Heart left ventricle (tissue), 16 donors: ENCODE measurements at regions of chr5 and their contacts with region 1.

Region 1: DNA sequence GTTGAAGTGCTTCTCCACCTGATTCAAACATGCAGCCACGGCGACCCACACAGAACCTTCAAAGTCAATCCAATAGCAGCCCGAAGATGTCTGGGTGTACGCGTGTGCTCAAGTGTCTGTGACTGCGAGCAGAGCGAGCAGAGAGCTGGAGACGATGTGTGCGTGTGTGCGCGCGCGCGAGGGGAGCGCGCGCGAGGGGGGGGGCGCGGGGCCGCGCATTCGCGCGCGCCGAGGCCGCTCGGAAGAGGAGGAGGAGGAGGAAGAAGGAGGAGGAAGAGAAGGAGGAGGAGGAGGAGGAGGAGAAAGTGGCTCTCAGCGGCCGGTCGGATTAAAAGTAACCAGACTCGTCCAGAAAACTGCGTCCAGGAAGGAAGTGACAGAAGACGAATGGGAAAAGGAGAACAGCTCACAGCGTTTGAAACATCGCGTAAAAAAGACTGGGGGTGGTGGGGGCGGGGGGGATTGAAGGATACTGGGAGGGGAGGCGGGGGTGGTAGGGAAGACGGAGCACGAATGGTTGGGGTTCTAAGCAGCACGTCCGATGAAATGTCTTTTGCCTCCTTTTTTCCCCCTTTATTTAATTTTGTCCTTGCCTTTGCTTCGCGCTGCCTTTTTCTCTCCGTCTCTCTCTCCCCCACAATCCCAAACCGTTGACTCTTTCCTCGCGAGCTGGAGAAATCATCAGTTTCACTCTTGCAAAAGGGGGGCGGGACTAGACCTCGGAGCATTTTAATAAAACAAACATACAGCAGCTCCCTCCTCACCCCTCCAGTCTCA is at the start of gene MEF2C:
- DNase-seq: peak; percentile 78 to 89 (median 86)
- ATAC-seq: peak; percentile 73 to 93 (median 85)
- H3K4me3 ChIP-seq: peak within 1 kb of the TSS; percentile 47 to 75 (median 71)
- H3K27ac ChIP-seq: peak within 1 kb of the TSS; percentile 77 to 93 (median 92)
- H3K4me1 ChIP-seq: peaks cover 0 to 53% (median 34%) of the 10 kb centered on the region in 12 donors
- H3K27me3 ChIP-seq: no peaks in the 10 kb centered on the region
- CTCF ChIP-seq: no peak
- POLR2A ChIP-seq: peak in 1 of 2 donors; percentile 87
- total RNA-seq, gene MEF2C: 36.8 to 98.5 (median 58.6) TPM

Region 2: GRCh38 chr5:88785391-88786219 is 97.6 kb before region 1 on chr5:
- intact Hi-C with region 1: loop called in 7 of 10 experiments (anchors 2 to 10 kb)
- DNase-seq: peak in 2 of 5 donors; percentile 53 to 61
- ATAC-seq: peak; percentile 91 to 96 (median 94)
- H3K4me3 ChIP-seq: peak overlapping the region in 9 of 12 donors; percentile 8 to 35 (median 20)
- H3K27ac ChIP-seq: peak overlapping the region; percentile 14 to 88 (median 82)
- H3K4me1 ChIP-seq: peaks cover 4 to 56% (median 37%) of the 10 kb centered on the region in 12 donors
- H3K27me3 ChIP-seq: no peaks in the 10 kb centered on the region
- CTCF ChIP-seq: no peak
- POLR2A ChIP-seq: no peak

Region 3: GRCh38 chr5:88833371-88834130 is 49.7 kb before region 1 on chr5:
- intact Hi-C with region 1: loop called in 8 of 10 experiments (anchors 2 to 10 kb)
- DNase-seq: peak in 4 of 5 donors; percentile 61 to 79 (median 72)
- ATAC-seq: peak; percentile 63 to 86 (median 78)
- H3K4me3 ChIP-seq: peak overlapping the region in 9 of 12 donors; percentile 21 to 41 (median 35)
- H3K27ac ChIP-seq: peak overlapping the region; percentile 56 to 93 (median 87)
- H3K4me1 ChIP-seq: peaks cover 11 to 97% (median 75%) of the 10 kb centered on the region in 12 donors
- H3K27me3 ChIP-seq: no peaks in the 10 kb centered on the region
- CTCF ChIP-seq: peak in 2 of 12 donors; percentile 23 to 24
- POLR2A ChIP-seq: no peak

Region 4: GRCh38 chr5:89756955-89757354 is 873.7 kb after region 1 on chr5:
- intact Hi-C with region 1: loop called in 1 of 10 experiments (anchors 10 kb)
- DNase-seq: peak in 2 of 5 donors; percentile 31 to 38
- ATAC-seq: peak; percentile 55 to 97 (median 82)
- H3K4me3 ChIP-seq: peak overlapping the region in 3 of 12 donors; percentile 5 to 35 (median 26)
- H3K27ac ChIP-seq: peak overlapping the region in 3 of 12 donors; percentile 14 to 35 (median 25)
- H3K4me1 ChIP-seq: peaks cover 0 to 9% (median 0%) of the 10 kb centered on the region in 12 donors
- H3K27me3 ChIP-seq: no peaks in the 10 kb centered on the region
- CTCF ChIP-seq: no peak
- POLR2A ChIP-seq: no peak

Region 5: DNA sequence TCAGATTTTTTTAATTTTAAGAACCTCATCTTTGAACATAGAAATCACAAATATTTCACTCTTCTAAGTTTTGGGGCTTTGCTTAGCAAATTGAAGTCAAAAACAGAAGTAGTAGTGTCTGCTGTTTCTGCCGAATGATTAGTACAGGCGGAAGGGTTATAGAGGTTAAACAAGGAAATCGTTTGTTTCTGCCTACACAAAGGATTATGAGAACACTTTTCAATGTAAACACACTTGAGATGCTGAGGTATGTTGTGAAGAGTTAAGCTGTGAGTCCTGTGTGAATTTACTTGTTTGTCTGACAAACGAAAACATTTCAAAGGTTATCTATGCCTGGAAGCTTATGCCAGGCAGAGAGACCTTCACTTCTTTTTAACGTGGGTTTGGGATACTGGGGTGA is 1301.5 kb after region 1 on chr5:
- intact Hi-C with region 1: loop called in 2 of 10 experiments (anchors 10 kb)
- DNase-seq: no peak
- ATAC-seq: no peak
- H3K4me3 ChIP-seq: no peak overlapping the region
- H3K27ac ChIP-seq: no peak overlapping the region
- H3K4me1 ChIP-seq: peaks cover 0 to 4% (median 0%) of the 10 kb centered on the region in 12 donors
- H3K27me3 ChIP-seq: no peaks in the 10 kb centered on the region
- CTCF ChIP-seq: no peak
- POLR2A ChIP-seq: no peak